Calu3 (cell line): ENCODE measurements at regions of chr3 and their contacts with region 1.

Region 1: GRCh38 chr3:68103811-68104210 is 449.4 kb upstream of the SUCLG2 start:
- DNase-seq: no peak
- H3K4me3 Mint-ChIP-seq: no peak overlapping the region
- H3K27ac Mint-ChIP-seq: no peak overlapping the region
- H3K4me1 Mint-ChIP-seq: no peaks in the 10 kb centered on the region
- H3K27me3 Mint-ChIP-seq: no peaks in the 10 kb centered on the region
- CTCF ChIP-seq: no peak

Region 2: DNA sequence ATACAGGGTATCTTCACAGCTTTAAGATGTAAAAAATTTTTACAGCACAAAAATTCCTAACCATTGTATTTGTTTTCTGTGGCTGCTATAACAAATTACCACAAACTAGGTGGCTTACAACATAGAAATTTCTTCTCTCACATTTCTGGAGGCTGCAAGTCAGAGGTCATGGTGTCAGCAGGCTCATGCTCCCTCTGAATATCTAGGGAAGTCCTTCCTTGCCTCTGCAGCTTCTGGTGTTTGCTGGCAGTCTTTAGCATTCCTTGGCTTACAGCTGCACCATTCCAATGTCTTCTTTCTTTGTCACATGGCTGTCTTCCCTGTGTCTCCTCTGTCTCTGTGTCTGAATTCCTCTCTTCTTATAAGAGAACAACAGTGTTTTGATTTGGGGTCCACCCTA is 139.2 kb before region 1 on chr3:
- CTCF ChIA-PET with region 1: no interaction called
- intact Hi-C with region 1: no loop called
- DNase-seq: no peak
- H3K4me3 Mint-ChIP-seq: no peak overlapping the region
- H3K27ac Mint-ChIP-seq: no peak overlapping the region
- H3K4me1 Mint-ChIP-seq: no peaks in the 10 kb centered on the region
- H3K27me3 Mint-ChIP-seq: no peaks in the 10 kb centered on the region
- CTCF ChIP-seq: no peak

Region 3: DNA sequence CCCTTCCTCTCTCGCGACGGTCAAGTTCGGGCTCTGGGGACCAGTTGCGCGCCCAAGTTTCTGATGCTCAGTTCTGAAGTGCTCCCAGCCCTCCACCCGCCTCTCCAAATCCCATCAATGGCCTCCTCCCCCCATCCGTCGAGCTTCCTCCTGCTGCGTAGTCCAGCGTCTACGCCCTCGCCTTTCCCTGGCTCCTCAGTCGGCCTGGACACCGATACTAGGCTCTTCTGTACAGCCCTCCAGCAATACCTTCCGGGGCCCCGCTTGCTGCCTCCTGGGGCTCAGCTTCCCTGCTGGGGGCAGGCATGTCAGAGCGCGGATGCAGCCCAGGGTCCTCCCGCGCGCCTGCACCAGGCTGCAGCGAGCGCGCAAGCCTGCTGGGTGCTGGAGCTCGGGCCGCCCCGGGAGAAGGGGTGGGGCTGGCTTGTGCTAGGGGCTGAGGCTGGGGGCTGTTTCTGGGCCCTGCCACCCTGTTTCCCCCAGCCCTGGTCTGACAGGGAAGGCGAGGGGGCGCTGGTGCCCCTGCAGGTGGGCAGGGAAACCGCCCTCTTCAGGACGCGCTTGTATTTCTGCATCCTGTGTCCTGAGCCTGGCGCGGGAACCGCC is 96.1 kb before region 1 on chr3:
- CTCF ChIA-PET with region 1: no interaction called
- intact Hi-C with region 1: loop called (anchors 5 kb)
- DNase-seq: peak; percentile 33
- H3K4me3 Mint-ChIP-seq: peak overlapping the region; percentile 40
- H3K27ac Mint-ChIP-seq: no peak overlapping the region
- H3K4me1 Mint-ChIP-seq: peaks cover 10% of the 10 kb centered on the region
- H3K27me3 Mint-ChIP-seq: peaks cover 46% of the 10 kb centered on the region
- CTCF ChIP-seq: no peak